ENCODE measurements at regions of chr3 and their contacts with region 1.

Region 1: GRCh38 chr3:165778456-165778855 is 58.8 kb downstream of the BCHE start:
- DNase-seq: no peak
- H3K4me3 ChIP-seq: no peak overlapping the region
- H3K4me3 Mint-ChIP-seq: no peak overlapping the region
- H3K27ac ChIP-seq: no peak overlapping the region
- H3K27ac Mint-ChIP-seq: no peak overlapping the region
- H3K4me1 ChIP-seq: no peaks in the 10 kb centered on the region
- H3K4me1 Mint-ChIP-seq: no peaks in the 10 kb centered on the region
- H3K27me3 ChIP-seq: no peaks in the 10 kb centered on the region
- H3K27me3 Mint-ChIP-seq: no peaks in the 10 kb centered on the region

Region 2: DNA sequence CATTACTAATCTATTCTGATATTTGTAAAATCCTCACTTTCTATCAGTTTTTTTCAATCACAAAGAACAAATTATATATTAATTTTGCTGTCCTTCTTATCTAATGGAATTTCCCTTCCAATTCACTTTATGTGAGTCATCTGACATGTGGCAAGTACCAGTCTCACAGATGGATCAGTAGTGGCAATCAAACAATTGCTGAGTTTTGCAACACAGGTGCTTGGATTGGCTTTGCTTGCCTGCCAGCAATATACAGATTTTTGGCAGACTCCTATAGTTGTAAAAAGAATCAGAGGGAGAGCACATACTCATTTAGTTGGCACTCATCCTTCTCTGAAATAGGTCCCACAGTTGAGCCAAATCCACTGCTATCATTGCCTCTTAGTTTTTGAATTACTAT is 24.9 kb before region 1 on chr3:
- CTCF ChIA-PET with region 1: no interaction called
- POLR2A ChIA-PET with region 1: no interaction called
- intact Hi-C with region 1: loop called (anchors 1 kb)
- DNase-seq: no peak
- H3K4me3 ChIP-seq: no peak overlapping the region
- H3K4me3 Mint-ChIP-seq: no peak overlapping the region
- H3K27ac ChIP-seq: no peak overlapping the region
- H3K27ac Mint-ChIP-seq: no peak overlapping the region
- H3K4me1 ChIP-seq: no peaks in the 10 kb centered on the region
- H3K4me1 Mint-ChIP-seq: no peaks in the 10 kb centered on the region
- H3K27me3 ChIP-seq: no peaks in the 10 kb centered on the region
- H3K27me3 Mint-ChIP-seq: no peaks in the 10 kb centered on the region

Region 3: GRCh38 chr3:165817160-165817709 is 38.8 kb after region 1 on chr3:
- CTCF ChIA-PET with region 1: no interaction called
- POLR2A ChIA-PET with region 1: no interaction called
- intact Hi-C with region 1: no loop called
- DNase-seq: no peak
- H3K4me3 ChIP-seq: no peak overlapping the region
- H3K4me3 Mint-ChIP-seq: no peak overlapping the region
- H3K27ac ChIP-seq: no peak overlapping the region
- H3K27ac Mint-ChIP-seq: no peak overlapping the region
- H3K4me1 ChIP-seq: no peaks in the 10 kb centered on the region
- H3K4me1 Mint-ChIP-seq: no peaks in the 10 kb centered on the region
- H3K27me3 ChIP-seq: no peaks in the 10 kb centered on the region
- H3K27me3 Mint-ChIP-seq: no peaks in the 10 kb centered on the region

Region 4: DNA sequence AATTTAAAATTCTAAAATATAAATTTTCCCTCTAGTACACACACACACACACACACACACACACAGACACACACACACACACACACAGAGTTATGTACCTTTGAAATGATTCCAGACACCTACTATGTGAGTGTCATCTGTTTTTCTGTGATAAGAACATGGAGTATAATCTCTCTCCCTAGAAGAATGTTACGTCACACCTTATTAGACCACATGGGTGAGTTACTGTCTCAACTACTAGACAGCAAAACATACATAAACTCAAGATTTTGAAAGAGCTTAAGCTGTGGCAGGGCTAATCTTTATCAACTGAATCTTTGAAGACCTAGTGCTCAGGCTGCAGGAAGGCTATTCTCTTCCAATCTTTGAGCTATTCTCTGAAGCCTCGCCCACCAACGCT is 444.7 kb after region 1 on chr3:
- CTCF ChIA-PET with region 1: no interaction called
- POLR2A ChIA-PET with region 1: no interaction called
- intact Hi-C with region 1: no loop called
- DNase-seq: no peak
- H3K4me3 ChIP-seq: no peak overlapping the region
- H3K4me3 Mint-ChIP-seq: no peak overlapping the region
- H3K27ac ChIP-seq: no peak overlapping the region
- H3K27ac Mint-ChIP-seq: no peak overlapping the region
- H3K4me1 ChIP-seq: no peaks in the 10 kb centered on the region
- H3K4me1 Mint-ChIP-seq: no peaks in the 10 kb centered on the region
- H3K27me3 ChIP-seq: no peaks in the 10 kb centered on the region
- H3K27me3 Mint-ChIP-seq: no peaks in the 10 kb centered on the region